ENCODE measurements at regions of chr21 and their contacts with region 1.

Region 1: GRCh38 chr21:42164064-42164789 is 54.7 kb upstream of the ABCG1 start:
- DNase-seq: peak; percentile 24
- ATAC-seq: peak; percentile 92
- H3K4me3 ChIP-seq: no peak overlapping the region
- H3K27ac ChIP-seq: no peak overlapping the region
- H3K4me1 ChIP-seq: no peaks in the 10 kb centered on the region
- H3K27me3 ChIP-seq: no peaks in the 10 kb centered on the region; a peak in 1 of 5 replicates
- CTCF ChIP-seq: peak; percentile 78
- EP300 ChIP-seq: no peak
- POLR2A ChIP-seq: no peak
- RAD21 ChIP-seq: peak; percentile 42

Region 2: DNA sequence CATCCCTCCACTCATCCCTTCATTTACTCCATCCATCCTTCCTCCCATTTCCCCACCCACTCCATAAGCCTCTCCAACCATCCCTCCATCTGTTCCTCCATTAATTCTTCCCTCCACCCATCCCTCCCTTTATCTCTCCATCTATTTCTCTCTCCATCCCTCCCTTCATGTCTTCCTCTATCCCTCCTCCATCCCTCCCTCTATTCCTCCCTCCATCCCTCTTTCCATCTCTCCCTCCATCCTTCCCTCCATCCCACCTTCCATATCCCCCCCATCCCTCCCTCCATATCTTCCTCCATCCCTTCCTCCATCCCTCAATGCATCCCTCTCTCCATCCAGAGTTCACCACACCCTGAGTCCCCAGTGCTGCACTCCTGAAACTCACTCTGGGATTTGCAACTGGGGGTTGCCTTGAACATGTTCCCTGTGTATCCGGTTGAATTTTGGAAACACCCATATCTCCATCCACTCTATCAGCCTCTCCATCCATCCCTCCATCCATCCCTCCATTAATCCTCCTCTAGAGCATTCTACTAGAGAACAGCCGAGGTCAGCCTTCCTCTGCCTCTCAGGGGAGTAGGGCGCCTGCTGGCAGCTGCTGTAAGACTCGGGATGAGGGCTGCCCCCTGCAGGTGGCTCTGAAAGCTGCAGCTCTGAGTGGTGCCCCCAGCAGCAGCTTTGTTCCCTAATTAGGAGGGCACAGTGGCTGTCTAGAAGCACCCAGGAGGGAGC is 94.1 kb after region 1 on chr21:
- CTCF ChIA-PET with region 1: interaction called, 5 read pairs
- POLR2A ChIA-PET with region 1: no interaction called
- in situ Hi-C with region 1: no loop called
- intact Hi-C with region 1: loop called (anchors 1 kb)
- DNase-seq: peak; percentile 34
- ATAC-seq: peak; percentile 86
- H3K4me3 ChIP-seq: no peak overlapping the region
- H3K27ac ChIP-seq: no peak overlapping the region
- H3K4me1 ChIP-seq: peaks cover 23% of the 10 kb centered on the region
- H3K27me3 ChIP-seq: peaks cover 2 to 38% of the 10 kb centered on the region in 2 experiments; a peak in 3 of 5 replicates
- CTCF ChIP-seq: peak; percentile 75
- EP300 ChIP-seq: no peak
- POLR2A ChIP-seq: no peak
- RAD21 ChIP-seq: peak; percentile 62